Sciatic nerve (tissue), 2 donors: ENCODE measurements at regions of chr12 and their contacts with region 1.

Region 1: GRCh38 chr12:84085046-84085445 is 827.6 kb downstream of the SLC6A15 start:
- DNase-seq: no peak
- ATAC-seq: no peak

Region 2: DNA sequence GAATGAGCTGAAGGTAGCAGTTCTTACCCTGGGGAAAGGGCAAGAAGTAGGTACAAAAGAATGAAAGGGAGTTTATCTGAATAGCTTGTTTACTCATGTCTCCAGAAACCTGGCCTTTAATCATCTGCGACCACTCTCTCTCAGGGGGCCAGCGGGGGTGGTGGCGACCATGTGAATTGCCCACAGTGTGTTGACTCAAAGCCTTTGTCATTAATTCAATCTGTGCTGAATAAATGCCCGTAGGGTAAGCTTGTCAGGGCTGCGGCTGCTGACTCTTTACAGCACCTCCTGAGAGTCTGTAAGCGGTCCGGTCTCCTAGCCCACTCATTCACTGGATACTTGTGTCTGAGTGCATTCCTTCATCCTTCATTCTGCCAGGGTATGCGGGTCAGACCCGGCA is 46.8 kb before region 1 on chr12:
- intact Hi-C with region 1: loop called (anchors 2 kb)
- DNase-seq: no peak
- ATAC-seq: no peak